ENCODE measurements at regions of chr10 and their contacts with region 1.

Region 1: GRCh38 chr10:48289501-48290238 is 15.2 kb upstream of the FRMPD2 start:
- DNase-seq: peak; percentile 62
- CTCF ChIP-seq: peak; percentile 92

Region 2: DNA sequence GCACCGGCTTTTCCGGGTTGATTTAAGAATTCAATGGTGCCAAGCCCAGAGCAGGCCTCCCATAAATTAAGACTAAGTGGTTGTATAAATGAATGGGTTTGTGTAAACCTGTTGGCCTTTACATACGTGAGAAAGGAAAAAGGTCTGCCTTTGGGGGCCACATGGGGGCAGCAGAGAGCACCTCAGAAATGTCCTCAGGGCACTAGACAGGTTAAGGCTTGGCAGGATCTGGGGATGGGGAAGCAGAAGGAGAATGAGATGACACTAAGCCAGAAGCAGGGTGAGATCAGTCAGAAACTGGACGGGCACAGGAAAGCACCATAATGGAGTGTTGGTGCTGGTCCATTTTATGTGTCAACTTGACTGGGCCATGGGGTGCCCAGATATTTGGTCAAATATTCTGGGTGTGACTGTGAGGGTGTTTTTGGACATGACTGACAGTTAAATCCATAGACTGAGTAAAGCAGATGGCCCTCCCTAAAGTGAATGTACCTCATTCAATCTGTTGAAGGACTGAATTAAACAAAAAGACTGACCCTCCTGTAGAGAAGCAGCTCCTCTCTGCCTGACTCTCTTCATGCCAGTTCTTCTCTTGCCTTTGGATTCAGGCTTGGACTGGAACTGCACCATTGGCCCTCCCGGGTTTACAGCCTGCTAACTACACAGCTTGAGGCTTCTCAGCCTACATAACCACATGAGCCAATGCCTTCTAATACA is 74.0 kb before region 1 on chr10:
- CTCF ChIA-PET with region 1: interaction called, 16 read pairs
- POLR2A ChIA-PET with region 1: no interaction called
- DNase-seq: peak; percentile 48
- CTCF ChIP-seq: peak; percentile 66

Region 3: GRCh38 chr10:48224979-48225560 is 64.6 kb before region 1 on chr10:
- CTCF ChIA-PET with region 1: interaction called, 10 read pairs
- POLR2A ChIA-PET with region 1: no interaction called
- DNase-seq: no peak
- CTCF ChIP-seq: no peak

Region 4: GRCh38 chr10:48271047-48271730 is 18.5 kb before region 1 on chr10:
- CTCF ChIA-PET with region 1: interaction called, 41 read pairs
- POLR2A ChIA-PET with region 1: no interaction called
- DNase-seq: peak; percentile 4
- CTCF ChIP-seq: no peak

Region 5: DNA sequence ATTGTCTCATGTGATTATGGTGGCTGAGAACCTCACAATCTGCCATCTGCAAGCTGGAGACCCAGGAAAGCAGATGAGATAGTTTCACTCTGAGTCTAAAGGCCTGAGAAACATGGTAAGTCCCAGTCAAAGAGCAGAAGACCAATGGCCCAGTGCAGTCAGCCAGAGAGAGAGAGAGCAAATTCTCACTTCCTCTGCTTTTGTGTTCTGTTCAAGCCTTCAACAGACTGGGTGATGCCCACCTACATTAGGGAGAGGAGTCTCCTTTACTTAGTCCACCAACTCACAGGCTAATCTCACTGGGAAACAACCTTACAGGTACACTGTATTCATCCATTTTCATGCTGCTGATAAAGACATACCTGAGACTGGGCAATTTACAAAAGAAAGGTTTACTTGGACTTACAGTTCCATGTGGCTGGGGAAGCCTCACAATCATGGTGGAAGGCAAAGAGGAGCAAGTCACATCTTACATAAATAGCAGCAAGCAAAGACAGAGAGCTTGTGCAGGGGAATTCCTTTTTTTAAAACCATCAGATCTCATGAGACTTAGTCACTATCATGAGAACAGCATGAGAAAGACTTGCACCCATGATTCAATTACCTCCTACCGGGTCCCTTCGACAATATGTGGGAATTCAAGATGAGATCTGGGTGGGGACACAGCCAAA is 10.5 kb before region 1 on chr10:
- CTCF ChIA-PET with region 1: interaction called, 41 read pairs
- POLR2A ChIA-PET with region 1: interaction called, 4 read pairs
- DNase-seq: peak; percentile 45
- CTCF ChIP-seq: no peak

Region 6: DNA sequence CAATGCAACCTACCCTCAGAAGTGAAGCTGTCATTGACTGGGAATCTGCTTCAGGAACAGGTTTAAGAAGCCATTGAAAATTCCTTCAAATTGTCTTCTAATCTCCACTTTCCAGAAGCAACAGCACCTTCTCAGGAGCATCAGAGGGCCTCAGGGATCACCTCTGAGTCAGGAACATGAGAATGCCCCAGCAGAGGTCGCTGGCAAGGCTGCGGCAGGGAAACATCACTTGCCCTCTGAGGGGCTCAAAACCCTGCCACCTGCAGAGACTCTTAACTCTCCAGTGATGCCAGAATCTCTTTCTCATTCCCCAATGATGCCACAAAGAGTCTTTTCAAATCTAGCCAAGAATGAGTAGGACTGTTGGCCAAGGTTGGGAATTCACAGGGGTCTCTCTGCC is 10.9 kb after region 1 on chr10:
- CTCF ChIA-PET with region 1: interaction called, 85 read pairs
- POLR2A ChIA-PET with region 1: no interaction called
- DNase-seq: no peak
- CTCF ChIP-seq: no peak

Region 7: GRCh38 chr10:48330269-48330668 is 40.6 kb after region 1 on chr10:
- CTCF ChIA-PET with region 1: no interaction called
- POLR2A ChIA-PET with region 1: no interaction called
- DNase-seq: no peak
- CTCF ChIP-seq: no peak

Region 8: GRCh38 chr10:48364659-48365405 is 75.2 kb after region 1 on chr10:
- CTCF ChIA-PET with region 1: no interaction called
- POLR2A ChIA-PET with region 1: no interaction called
- DNase-seq: no peak
- CTCF ChIP-seq: no peak

Region 9: DNA sequence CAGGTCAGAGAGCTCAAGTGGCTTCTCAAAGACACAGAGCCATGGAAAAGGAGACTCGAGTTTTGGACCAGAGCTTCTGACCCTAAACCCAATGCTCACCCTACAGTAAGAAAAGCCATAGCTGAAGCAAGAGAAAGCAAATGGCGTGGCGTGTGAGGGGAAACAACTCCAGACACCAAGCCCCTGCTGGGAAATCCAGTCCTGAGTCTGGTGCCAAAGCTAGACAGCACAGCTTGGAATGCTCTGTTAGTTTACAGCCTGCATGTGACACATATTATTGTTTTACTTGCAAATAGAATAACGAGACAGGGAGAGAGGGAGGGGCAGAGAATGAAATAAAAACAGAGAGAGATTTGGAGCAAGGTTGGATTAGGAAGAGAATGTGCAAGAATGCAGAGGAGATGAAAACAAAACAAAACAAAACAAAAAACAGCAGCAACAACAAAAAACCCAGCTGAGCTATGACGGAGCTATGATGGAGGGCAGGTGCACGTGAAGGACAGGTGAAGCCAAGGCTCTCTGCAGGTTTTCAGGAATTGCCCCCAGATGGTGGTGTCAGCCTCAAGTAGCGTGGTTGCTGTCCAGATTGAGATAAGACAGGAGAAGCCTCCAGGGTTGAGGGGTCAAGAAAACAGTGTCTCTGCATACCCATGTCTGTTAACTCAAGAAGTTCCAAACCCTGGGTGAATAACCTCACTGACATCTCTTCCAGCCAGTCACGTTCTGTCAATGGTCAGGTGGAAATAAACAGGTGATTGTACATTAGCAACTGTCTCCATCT is 719.7 kb after region 1 on chr10:
- CTCF ChIA-PET with region 1: no interaction called
- POLR2A ChIA-PET with region 1: no interaction called
- DNase-seq: no peak
- CTCF ChIP-seq: no peak